ENCODE measurements at regions of chr13 and their contacts with region 1.

Region 1: GRCh38 chr13:25286969-25287961 is at the start of gene MTMR6:
- DNase-seq: peak; percentile 80
- ATAC-seq: peak; percentile 97
- H3K4me3 ChIP-seq: peak within 1 kb of the TSS; percentile 59
- H3K27ac ChIP-seq: peak within 1 kb of the TSS; percentile 95
- H3K4me1 ChIP-seq: peaks cover 2% of the 10 kb centered on the region
- H3K27me3 ChIP-seq: no peaks in the 10 kb centered on the region
- CTCF ChIP-seq: peak; percentile 96 to 99 (median 98); a peak in 5 of 6 replicates
- EP300 ChIP-seq: peak; percentile 4 to 78; a peak in 2 of 4 replicates
- POLR2A ChIP-seq: peak; percentile 86
- RAD21 ChIP-seq: peak; percentile 52
- polyA plus RNA-seq, gene MTMR6: 13.0 to 21.0 TPM

Region 2: DNA sequence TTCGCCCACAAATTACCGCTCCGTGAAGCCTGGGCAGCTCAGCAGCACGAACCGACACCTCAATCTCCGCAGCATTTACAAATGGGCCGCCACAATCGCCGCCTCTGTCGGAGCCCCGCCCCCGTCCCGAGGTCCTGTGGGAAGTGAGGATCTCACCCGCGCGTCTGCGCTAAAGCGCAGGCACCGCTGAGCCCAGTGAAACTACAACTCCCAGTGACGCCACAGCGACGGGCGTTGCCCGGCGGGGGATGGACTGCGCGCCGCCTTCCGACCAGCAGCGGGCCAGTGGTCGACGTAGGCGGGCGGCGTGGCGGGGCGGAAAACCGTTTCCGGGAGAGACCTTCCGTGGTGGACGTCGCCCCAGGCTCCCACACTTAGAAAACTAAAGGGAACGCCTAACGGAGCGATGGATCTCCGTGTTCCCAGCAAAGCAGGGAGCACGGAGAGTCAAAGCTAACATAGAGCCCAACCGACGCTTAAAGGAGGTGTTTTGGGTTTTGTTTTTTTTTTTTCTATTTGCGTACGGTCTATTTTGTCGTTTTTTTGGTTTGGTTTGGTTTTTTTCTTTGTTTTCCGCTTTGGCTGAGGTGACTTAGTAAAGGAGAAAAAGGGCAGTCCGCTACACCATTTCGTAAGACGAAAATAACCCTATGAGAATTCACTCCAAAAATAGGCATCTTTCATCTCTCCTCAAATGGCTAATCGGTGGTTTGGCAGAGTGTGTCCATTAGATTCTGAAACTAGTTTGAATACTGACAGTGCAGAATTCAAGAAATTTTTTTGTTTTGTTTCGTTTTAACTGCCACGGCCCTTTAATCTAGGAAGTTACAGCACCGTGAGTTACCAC is 364.3 kb before region 1 on chr13:
- CTCF ChIA-PET with region 1: no interaction called
- POLR2A ChIA-PET with region 1: no interaction called
- RAD21 ChIA-PET with region 1: no interaction called
- SMC1A ChIA-PET with region 1: no interaction called
- in situ Hi-C with region 1: no loop called
- intact Hi-C with region 1: loop called (anchors 10 kb)
- DNase-seq: peak; percentile 93
- ATAC-seq: peak; percentile 95
- H3K4me3 ChIP-seq: peak overlapping the region; percentile 90
- H3K27ac ChIP-seq: peak overlapping the region; percentile 100
- H3K4me1 ChIP-seq: peaks cover 8% of the 10 kb centered on the region; the same call in 1 of the 2 replicates
- H3K27me3 ChIP-seq: no peaks in the 10 kb centered on the region
- CTCF ChIP-seq: no peak
- EP300 ChIP-seq: peak; percentile 36 to 48; a peak in 3 of 4 replicates
- POLR2A ChIP-seq: peak; percentile 90
- RAD21 ChIP-seq: no peak

Region 3: DNA sequence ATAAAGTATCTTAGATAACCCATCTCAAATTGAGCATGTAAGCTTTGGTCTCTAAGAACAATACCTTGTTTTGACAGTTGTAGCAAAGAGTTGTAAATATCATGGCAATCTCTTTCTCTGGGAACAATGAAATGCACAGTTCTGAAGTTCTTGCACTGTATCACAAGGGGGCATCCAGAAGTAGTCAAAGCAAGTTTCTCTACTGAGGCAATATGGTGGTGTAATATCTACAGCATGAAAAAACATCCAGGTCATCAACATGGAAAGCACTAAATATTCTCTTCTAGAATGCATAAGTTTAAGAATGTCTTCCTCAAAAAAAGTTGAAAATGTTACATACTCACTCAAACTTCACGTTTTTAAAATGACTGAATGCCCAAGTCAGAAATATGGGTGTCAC is 19.6 kb before region 1 on chr13:
- CTCF ChIA-PET with region 1: interaction called, 10 read pairs
- POLR2A ChIA-PET with region 1: no interaction called
- RAD21 ChIA-PET with region 1: interaction called, 6 read pairs
- SMC1A ChIA-PET with region 1: interaction called, 4 read pairs
- in situ Hi-C with region 1: no loop called
- intact Hi-C with region 1: no loop called
- DNase-seq: no peak
- ATAC-seq: peak; percentile 71
- H3K4me3 ChIP-seq: no peak overlapping the region
- H3K27ac ChIP-seq: no peak overlapping the region
- H3K4me1 ChIP-seq: no peaks in the 10 kb centered on the region
- H3K27me3 ChIP-seq: no peaks in the 10 kb centered on the region
- CTCF ChIP-seq: peak; percentile 12 to 33 (median 19); a peak in 3 of 6 replicates
- EP300 ChIP-seq: no peak
- POLR2A ChIP-seq: no peak
- RAD21 ChIP-seq: peak; percentile 55

Region 4: GRCh38 chr13:25276748-25277147 is 10.5 kb before region 1 on chr13:
- CTCF ChIA-PET with region 1: interaction called, 13 read pairs
- POLR2A ChIA-PET with region 1: interaction called, 5 read pairs
- RAD21 ChIA-PET with region 1: interaction called, 6 read pairs
- SMC1A ChIA-PET with region 1: interaction called, 20 read pairs
- in situ Hi-C with region 1: no loop called
- intact Hi-C with region 1: no loop called
- DNase-seq: no peak
- ATAC-seq: peak; percentile 61
- H3K4me3 ChIP-seq: no peak overlapping the region
- H3K27ac ChIP-seq: no peak overlapping the region
- H3K4me1 ChIP-seq: peaks cover 6% of the 10 kb centered on the region; the same call in 1 of the 2 replicates
- H3K27me3 ChIP-seq: no peaks in the 10 kb centered on the region
- CTCF ChIP-seq: no peak
- EP300 ChIP-seq: no peak
- POLR2A ChIP-seq: no peak
- RAD21 ChIP-seq: no peak

Region 5: GRCh38 chr13:25301347-25302047 is 14.2 kb after region 1 on chr13 and contains the start of gene NUP58:
- CTCF ChIA-PET with region 1: interaction called, 14 read pairs
- POLR2A ChIA-PET with region 1: interaction called, 5 read pairs
- RAD21 ChIA-PET with region 1: interaction called, 3 read pairs
- SMC1A ChIA-PET with region 1: interaction called, 4 read pairs
- in situ Hi-C with region 1: no loop called
- intact Hi-C with region 1: loop called (anchors 2 kb)
- DNase-seq: peak; percentile 83
- ATAC-seq: peak; percentile 99
- H3K4me3 ChIP-seq: peak within 1 kb of the TSS; percentile 91
- H3K27ac ChIP-seq: peak within 1 kb of the TSS; percentile 78
- H3K4me1 ChIP-seq: no peaks in the 10 kb centered on the region
- H3K27me3 ChIP-seq: no peaks in the 10 kb centered on the region
- CTCF ChIP-seq: no peak
- EP300 ChIP-seq: peak; percentile 14 to 59; a peak in 3 of 4 replicates
- POLR2A ChIP-seq: peak; percentile 98
- RAD21 ChIP-seq: no peak
- polyA plus RNA-seq, gene NUP58: 12.1 to 14.0 TPM

Region 6: DNA sequence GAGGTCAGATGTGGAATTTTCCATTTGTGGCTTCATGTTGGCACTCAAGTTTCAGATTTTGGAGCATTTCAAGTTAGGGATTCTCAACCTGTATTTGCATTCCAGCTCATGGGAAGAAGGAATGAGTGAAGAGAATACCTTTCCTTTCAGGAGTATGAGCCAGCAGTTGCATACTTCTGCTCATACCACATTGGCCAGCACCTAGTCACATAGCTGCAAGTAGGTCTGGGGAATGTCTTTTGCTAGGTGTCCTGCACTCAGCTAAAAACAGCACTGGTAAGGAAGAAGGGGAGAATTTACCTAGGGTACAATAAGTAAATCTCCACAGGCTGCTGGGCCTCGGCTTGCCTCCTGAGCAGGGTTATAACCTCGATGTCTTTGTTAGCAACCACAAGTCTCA is 59.9 kb after region 1 on chr13:
- CTCF ChIA-PET with region 1: no interaction called
- POLR2A ChIA-PET with region 1: no interaction called
- RAD21 ChIA-PET with region 1: no interaction called
- SMC1A ChIA-PET with region 1: no interaction called
- in situ Hi-C with region 1: no loop called
- intact Hi-C with region 1: no loop called
- DNase-seq: no peak
- ATAC-seq: no peak
- H3K4me3 ChIP-seq: no peak overlapping the region
- H3K27ac ChIP-seq: no peak overlapping the region
- H3K4me1 ChIP-seq: no peaks in the 10 kb centered on the region
- H3K27me3 ChIP-seq: no peaks in the 10 kb centered on the region
- CTCF ChIP-seq: no peak
- EP300 ChIP-seq: no peak
- POLR2A ChIP-seq: no peak
- RAD21 ChIP-seq: no peak

Measured in GM12878 (cell line).